Caco-2 (cell line): ENCODE measurements at regions of chr1 and their contacts with region 1.

Region 1: GRCh38 chr1:42576935-42577334 is 81.3 kb upstream of the PPIH start:
- DNase-seq: no peak
- H3K4me3 ChIP-seq: no peak overlapping the region
- H3K4me3 Mint-ChIP-seq: no peak overlapping the region
- H3K27ac Mint-ChIP-seq: no peak overlapping the region
- H3K4me1 ChIP-seq: no peaks in the 10 kb centered on the region
- H3K4me1 Mint-ChIP-seq: no peaks in the 10 kb centered on the region
- H3K27me3 ChIP-seq: no peaks in the 10 kb centered on the region
- H3K27me3 Mint-ChIP-seq: no peaks in the 10 kb centered on the region
- CTCF ChIP-seq: no peak

Region 2: DNA sequence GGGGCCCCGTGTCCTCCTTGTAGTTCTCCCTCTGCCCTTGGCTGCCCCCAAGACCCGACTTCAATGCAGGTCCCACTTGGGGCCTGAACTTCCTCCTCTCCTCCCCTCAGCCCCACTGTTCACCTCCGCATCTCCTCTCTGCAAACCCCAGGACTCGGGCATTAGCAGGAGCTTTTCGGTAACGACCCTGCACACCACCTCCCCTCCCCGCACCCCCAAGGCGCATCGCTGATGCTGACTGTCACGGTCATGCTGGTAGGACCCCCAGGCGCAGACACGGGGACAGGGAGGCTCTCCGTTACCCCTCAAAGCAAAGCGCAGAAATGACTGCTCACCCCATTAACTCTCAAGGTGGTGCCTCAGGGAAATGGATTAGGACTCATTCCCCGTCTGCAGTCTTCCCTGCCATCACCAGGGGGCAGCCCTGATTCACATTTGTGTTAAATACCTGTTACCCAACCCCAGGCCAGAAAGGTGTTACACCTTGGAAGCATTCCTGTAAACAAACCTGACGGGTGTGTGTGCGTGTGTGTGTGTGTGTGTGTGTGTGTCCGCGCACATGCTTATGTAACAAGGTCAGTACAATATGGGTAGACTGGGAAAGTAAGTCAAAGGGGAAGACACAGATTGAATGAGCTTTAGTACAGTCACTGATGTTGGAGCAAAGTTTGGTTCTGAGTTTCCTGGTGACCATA is 430.2 kb before region 1 on chr1:
- CTCF ChIA-PET with region 1: interaction called, 5 read pairs
- POLR2A ChIA-PET with region 1: no interaction called
- intact Hi-C with region 1: loop called (anchors 1 kb)
- DNase-seq: peak; percentile 89
- H3K4me3 ChIP-seq: no peak overlapping the region
- H3K4me3 Mint-ChIP-seq: no peak overlapping the region
- H3K27ac Mint-ChIP-seq: no peak overlapping the region
- H3K4me1 ChIP-seq: peaks cover 7% of the 10 kb centered on the region
- H3K4me1 Mint-ChIP-seq: no peaks in the 10 kb centered on the region
- H3K27me3 ChIP-seq: no peaks in the 10 kb centered on the region
- H3K27me3 Mint-ChIP-seq: peaks cover 7% of the 10 kb centered on the region
- CTCF ChIP-seq: peak; percentile 75 to 89

Region 3: DNA sequence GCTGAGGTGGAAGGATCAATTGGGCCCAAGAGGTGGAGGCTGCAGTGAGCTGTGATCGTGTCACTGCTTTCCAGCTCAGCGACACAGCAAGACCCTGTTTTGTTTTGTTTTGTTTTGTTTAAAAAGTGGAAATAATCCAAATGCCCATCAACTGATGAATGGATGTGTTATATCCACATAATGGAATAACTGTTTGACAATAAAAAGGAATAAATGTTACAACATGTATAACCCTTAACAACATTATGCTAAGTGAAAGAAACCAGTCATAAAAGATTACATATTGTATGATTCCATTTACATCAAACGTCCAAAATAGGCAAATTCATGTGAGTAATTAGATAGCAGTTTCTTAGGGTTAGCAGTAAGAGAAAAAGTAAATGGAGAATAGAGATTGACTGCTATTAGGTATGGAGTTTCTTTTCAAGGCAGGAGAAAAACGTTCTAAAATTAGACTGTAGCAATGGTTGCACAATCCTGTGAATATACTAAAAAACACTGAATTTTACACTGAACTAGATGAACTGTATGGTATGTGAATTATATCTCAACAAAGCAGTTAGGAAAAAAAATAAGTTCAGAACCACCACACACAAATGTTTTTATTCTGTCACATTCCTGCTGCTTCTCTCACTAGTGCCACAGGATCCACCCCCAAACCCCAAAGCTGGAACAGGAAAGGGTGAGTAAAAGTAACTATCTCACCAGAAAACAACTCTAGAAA is 257.6 kb before region 1 on chr1:
- CTCF ChIA-PET with region 1: no interaction called
- POLR2A ChIA-PET with region 1: no interaction called
- intact Hi-C with region 1: no loop called
- DNase-seq: no peak
- H3K4me3 ChIP-seq: no peak overlapping the region
- H3K4me3 Mint-ChIP-seq: no peak overlapping the region
- H3K27ac Mint-ChIP-seq: no peak overlapping the region
- H3K4me1 ChIP-seq: peaks cover 17% of the 10 kb centered on the region; the same call in 1 of the 2 replicates
- H3K4me1 Mint-ChIP-seq: peaks cover 33% of the 10 kb centered on the region
- H3K27me3 ChIP-seq: no peaks in the 10 kb centered on the region
- H3K27me3 Mint-ChIP-seq: no peaks in the 10 kb centered on the region
- CTCF ChIP-seq: no peak

Region 4: DNA sequence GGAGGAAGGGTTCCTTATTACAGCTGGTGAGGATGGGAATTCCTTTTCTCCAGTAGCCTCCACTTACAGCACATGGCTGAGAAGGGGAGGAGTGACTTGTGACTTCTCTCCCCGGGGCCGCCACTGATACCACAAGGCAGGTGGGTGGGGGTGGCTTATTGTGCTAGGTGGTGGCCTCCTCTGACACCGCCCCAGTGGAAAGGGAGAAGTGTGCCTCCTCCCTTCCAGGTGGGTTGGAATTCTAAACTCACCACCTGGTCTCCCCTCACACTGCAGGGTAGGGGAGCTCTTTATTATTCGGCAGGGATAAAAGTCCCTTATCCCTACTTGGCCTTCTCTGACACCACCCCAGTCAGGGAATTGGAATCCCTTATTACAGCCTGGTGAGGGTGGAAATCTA is 24.3 kb before region 1 on chr1:
- CTCF ChIA-PET with region 1: no interaction called
- POLR2A ChIA-PET with region 1: no interaction called
- intact Hi-C with region 1: no loop called
- DNase-seq: no peak
- H3K4me3 ChIP-seq: no peak overlapping the region
- H3K4me3 Mint-ChIP-seq: no peak overlapping the region
- H3K27ac Mint-ChIP-seq: no peak overlapping the region
- H3K4me1 ChIP-seq: no peaks in the 10 kb centered on the region
- H3K4me1 Mint-ChIP-seq: no peaks in the 10 kb centered on the region
- H3K27me3 ChIP-seq: no peaks in the 10 kb centered on the region
- H3K27me3 Mint-ChIP-seq: peaks cover 2% of the 10 kb centered on the region
- CTCF ChIP-seq: no peak

Region 5: GRCh38 chr1:42601472-42601871 is 24.5 kb after region 1 on chr1:
- CTCF ChIA-PET with region 1: no interaction called
- POLR2A ChIA-PET with region 1: no interaction called
- intact Hi-C with region 1: no loop called
- DNase-seq: no peak
- H3K4me3 ChIP-seq: no peak overlapping the region
- H3K4me3 Mint-ChIP-seq: no peak overlapping the region
- H3K27ac Mint-ChIP-seq: no peak overlapping the region
- H3K4me1 ChIP-seq: no peaks in the 10 kb centered on the region
- H3K4me1 Mint-ChIP-seq: no peaks in the 10 kb centered on the region
- H3K27me3 ChIP-seq: no peaks in the 10 kb centered on the region
- H3K27me3 Mint-ChIP-seq: peaks cover 16% of the 10 kb centered on the region
- CTCF ChIP-seq: no peak

Region 6: DNA sequence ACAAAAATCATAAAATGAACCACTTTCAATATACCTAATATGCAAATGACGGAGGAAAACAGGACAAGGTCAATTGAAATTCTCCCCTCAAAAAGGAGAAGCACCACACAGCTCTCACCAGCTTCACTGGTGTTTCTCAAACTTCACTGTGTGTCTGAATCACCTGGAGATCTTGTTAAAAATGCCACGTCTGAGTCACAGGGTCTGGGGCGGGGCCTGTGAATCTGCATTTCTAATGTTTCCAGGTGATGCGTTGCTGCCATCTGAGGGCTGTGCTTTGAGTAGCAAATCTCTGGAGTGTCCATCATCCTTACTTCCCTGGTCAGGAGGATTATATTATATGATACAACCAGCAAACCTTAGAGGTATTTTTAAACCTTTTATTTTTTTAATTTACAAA is 154.1 kb after region 1 on chr1:
- CTCF ChIA-PET with region 1: no interaction called
- POLR2A ChIA-PET with region 1: no interaction called
- intact Hi-C with region 1: loop called (anchors 1 kb)
- DNase-seq: peak in 1 of 2 experiments; percentile 55
- H3K4me3 ChIP-seq: no peak overlapping the region
- H3K4me3 Mint-ChIP-seq: no peak overlapping the region
- H3K27ac Mint-ChIP-seq: no peak overlapping the region
- H3K4me1 ChIP-seq: peaks cover 11% of the 10 kb centered on the region; the same call in 1 of the 2 replicates
- H3K4me1 Mint-ChIP-seq: no peaks in the 10 kb centered on the region
- H3K27me3 ChIP-seq: no peaks in the 10 kb centered on the region
- H3K27me3 Mint-ChIP-seq: no peaks in the 10 kb centered on the region
- CTCF ChIP-seq: peak in 1 of 2 experiments; percentile 25

Region 7: GRCh38 chr1:42756956-42757891 is 180.3 kb after region 1 on chr1:
- CTCF ChIA-PET with region 1: no interaction called
- POLR2A ChIA-PET with region 1: no interaction called
- intact Hi-C with region 1: loop called (anchors 5 kb)
- DNase-seq: peak in 1 of 2 experiments; percentile 49
- H3K4me3 ChIP-seq: no peak overlapping the region
- H3K4me3 Mint-ChIP-seq: no peak overlapping the region
- H3K27ac Mint-ChIP-seq: no peak overlapping the region
- H3K4me1 ChIP-seq: no peaks in the 10 kb centered on the region
- H3K4me1 Mint-ChIP-seq: peaks cover 6% of the 10 kb centered on the region
- H3K27me3 ChIP-seq: no peaks in the 10 kb centered on the region
- H3K27me3 Mint-ChIP-seq: no peaks in the 10 kb centered on the region
- CTCF ChIP-seq: peak; percentile 61 to 64